ENCODE measurements at regions of chr11 and their contacts with region 1.

Region 1: GRCh38 chr11:73350908-73351636 is 25.1 kb upstream of the RELT start:
- DNase-seq: peak; percentile 85
- ATAC-seq: peak; percentile 96
- H3K4me3 ChIP-seq: no peak overlapping the region
- H3K4me3 Mint-ChIP-seq: no peak overlapping the region
- H3K27ac ChIP-seq: peak overlapping the region in 1 of 2 donors; percentile 46
- H3K27ac Mint-ChIP-seq: peak overlapping the region; percentile 41
- H3K4me1 ChIP-seq: peaks cover 0 to 4% of the 10 kb centered on the region in 2 donors
- H3K4me1 Mint-ChIP-seq: peaks cover 11% of the 10 kb centered on the region
- H3K27me3 ChIP-seq: no peaks in the 10 kb centered on the region
- H3K27me3 Mint-ChIP-seq: peaks cover 5% of the 10 kb centered on the region
- CTCF ChIP-seq: peak; percentile 97

Region 2: GRCh38 chr11:72969894-72970335 is 381.2 kb before region 1 on chr11:
- CTCF ChIA-PET with region 1: no interaction called
- POLR2A ChIA-PET with region 1: no interaction called
- intact Hi-C with region 1: no loop called
- DNase-seq: no peak
- ATAC-seq: no peak
- H3K4me3 ChIP-seq: no peak overlapping the region
- H3K4me3 Mint-ChIP-seq: no peak overlapping the region
- H3K27ac ChIP-seq: peak overlapping the region; percentile 35 to 63
- H3K27ac Mint-ChIP-seq: peak overlapping the region; percentile 56
- H3K4me1 ChIP-seq: peaks cover 24 to 37% of the 10 kb centered on the region in 2 donors
- H3K4me1 Mint-ChIP-seq: peaks cover 65% of the 10 kb centered on the region
- H3K27me3 ChIP-seq: no peaks in the 10 kb centered on the region
- H3K27me3 Mint-ChIP-seq: no peaks in the 10 kb centered on the region
- CTCF ChIP-seq: no peak

Region 3: GRCh38 chr11:73177778-73178577 is 173.1 kb before region 1 on chr11:
- CTCF ChIA-PET with region 1: no interaction called
- POLR2A ChIA-PET with region 1: no interaction called
- intact Hi-C with region 1: no loop called
- DNase-seq: peak; percentile 88
- ATAC-seq: peak; percentile 99
- H3K4me3 ChIP-seq: peak overlapping the region in 1 of 5 experiments; percentile 16
- H3K4me3 Mint-ChIP-seq: peak overlapping the region; percentile 37
- H3K27ac ChIP-seq: peak overlapping the region; percentile 17 to 19
- H3K27ac Mint-ChIP-seq: peak overlapping the region; percentile 81
- H3K4me1 ChIP-seq: peaks cover 32 to 40% of the 10 kb centered on the region in 2 donors
- H3K4me1 Mint-ChIP-seq: peaks cover 38% of the 10 kb centered on the region
- H3K27me3 ChIP-seq: no peaks in the 10 kb centered on the region
- H3K27me3 Mint-ChIP-seq: no peaks in the 10 kb centered on the region
- CTCF ChIP-seq: peak; percentile 93

Region 4: DNA sequence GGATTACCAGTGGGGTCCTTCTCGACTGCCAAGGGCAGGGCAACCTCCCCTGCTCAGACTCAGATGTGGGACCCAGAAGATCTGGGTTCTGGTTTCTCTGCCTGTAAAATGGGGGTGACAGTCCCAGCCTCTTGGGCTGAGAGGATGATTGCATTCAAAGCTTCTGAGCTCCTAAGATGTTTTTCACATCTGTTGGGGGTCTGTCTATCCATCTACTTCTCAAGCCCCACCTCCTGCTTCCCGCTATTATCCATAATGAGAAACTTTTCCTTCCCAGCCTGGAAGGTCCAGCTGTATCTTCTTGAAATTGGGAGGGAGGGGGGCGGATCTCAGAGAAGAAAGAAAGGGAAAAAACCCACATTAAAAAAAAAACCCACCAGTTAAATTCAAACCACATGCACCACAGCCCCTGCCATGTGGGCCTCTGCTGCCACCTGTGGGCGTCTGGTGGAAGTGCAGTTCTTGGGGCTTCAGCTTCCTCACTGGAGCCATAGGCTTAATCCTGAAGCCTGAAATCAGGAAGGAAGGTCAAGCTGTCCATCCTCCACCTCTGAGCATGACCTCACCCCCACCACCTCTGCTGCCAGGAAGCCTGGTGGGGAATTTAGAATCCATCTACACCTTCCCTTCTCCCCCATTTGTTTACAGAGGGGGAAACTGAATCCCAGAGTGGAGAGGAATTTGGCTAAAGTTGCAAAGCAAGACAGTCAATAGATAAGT is 15.7 kb before region 1 on chr11:
- CTCF ChIA-PET with region 1: interaction called, 22 read pairs
- POLR2A ChIA-PET with region 1: interaction called, 4 read pairs
- intact Hi-C with region 1: no loop called
- DNase-seq: peak; percentile 81
- ATAC-seq: peak; percentile 81
- H3K4me3 ChIP-seq: no peak overlapping the region
- H3K4me3 Mint-ChIP-seq: no peak overlapping the region
- H3K27ac ChIP-seq: no peak overlapping the region
- H3K27ac Mint-ChIP-seq: no peak overlapping the region
- H3K4me1 ChIP-seq: no peaks in the 10 kb centered on the region
- H3K4me1 Mint-ChIP-seq: no peaks in the 10 kb centered on the region
- H3K27me3 ChIP-seq: peaks cover 0 to 8% (median 2%) of the 10 kb centered on the region in 4 experiments
- H3K27me3 Mint-ChIP-seq: no peaks in the 10 kb centered on the region
- CTCF ChIP-seq: peak; percentile 99

Region 5: DNA sequence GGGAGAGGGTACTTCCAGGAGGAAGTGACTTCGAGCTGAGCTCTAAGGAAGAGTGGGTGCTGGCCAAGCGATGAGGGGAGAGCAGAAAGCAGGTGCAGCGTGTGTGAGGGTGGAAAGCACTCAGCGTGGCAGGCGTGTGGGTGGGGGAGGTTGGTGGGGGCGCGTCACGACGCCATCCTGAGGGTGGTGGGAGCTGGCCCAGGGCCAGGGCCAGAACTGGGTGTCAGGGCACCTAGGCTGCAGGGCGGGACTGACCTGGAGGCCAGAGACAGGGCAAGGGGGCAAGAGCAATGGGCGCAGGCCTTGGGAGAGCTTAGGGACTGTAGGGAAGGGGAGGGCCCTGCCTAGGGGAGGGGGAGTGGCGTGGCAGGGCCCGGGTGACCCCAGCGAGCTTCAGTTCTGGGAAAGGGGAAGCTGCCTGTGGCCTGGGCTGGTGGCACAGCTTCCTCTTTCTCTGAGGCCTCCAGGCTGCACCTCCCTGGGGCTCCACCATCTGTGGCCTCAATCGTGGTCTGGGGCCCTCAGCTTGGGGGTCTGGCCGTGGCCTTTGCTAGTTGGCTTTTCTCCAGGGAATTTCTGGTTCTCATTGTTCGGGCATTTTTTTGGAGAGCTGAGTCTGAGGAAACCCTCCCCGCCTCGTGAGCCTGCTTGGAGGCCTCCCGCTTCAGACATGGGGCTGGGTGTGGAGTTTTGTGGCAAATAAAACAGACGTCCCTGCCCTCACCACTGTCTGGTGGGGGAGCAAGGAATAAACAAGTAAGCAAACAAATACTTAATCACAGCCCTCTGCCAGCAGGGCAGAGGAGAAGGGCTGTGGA is 34.0 kb after region 1 on chr11:
- CTCF ChIA-PET with region 1: interaction called, 352 read pairs
- POLR2A ChIA-PET with region 1: interaction called, 3 read pairs
- intact Hi-C with region 1: no loop called
- DNase-seq: peak; percentile 96
- ATAC-seq: peak; percentile 69
- H3K4me3 ChIP-seq: peak overlapping the region in 4 of 5 experiments; percentile 31 to 58 (median 42)
- H3K4me3 Mint-ChIP-seq: peak overlapping the region; percentile 100
- H3K27ac ChIP-seq: peak overlapping the region; percentile 98
- H3K27ac Mint-ChIP-seq: peak overlapping the region; percentile 99
- H3K4me1 ChIP-seq: peaks cover 100% of the 10 kb centered on the region in 2 donors
- H3K4me1 Mint-ChIP-seq: peaks cover 99% of the 10 kb centered on the region
- H3K27me3 ChIP-seq: no peaks in the 10 kb centered on the region
- H3K27me3 Mint-ChIP-seq: no peaks in the 10 kb centered on the region
- CTCF ChIP-seq: no peak

Region 6: DNA sequence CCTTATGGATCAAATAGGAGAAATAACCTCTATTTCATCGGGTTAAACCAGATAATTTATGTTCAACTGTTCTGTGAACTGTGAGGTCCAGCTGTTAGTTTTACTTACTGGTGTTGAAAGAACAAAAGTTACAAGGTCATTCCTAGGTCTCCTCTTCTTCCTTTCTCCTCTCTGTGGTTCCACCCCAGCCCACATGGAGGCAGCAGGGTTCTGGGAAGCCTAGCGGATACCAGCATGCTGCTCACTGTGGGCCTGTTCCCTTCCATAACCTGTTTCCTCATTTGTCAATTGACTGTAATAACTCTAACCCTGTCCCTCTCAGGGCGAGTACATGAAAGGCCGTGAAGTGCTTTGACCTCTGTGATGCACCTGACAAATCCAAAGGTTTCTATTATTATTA is 53.0 kb after region 1 on chr11:
- CTCF ChIA-PET with region 1: interaction called, 102 read pairs
- POLR2A ChIA-PET with region 1: no interaction called
- intact Hi-C with region 1: no loop called
- DNase-seq: peak; percentile 21
- ATAC-seq: no peak
- H3K4me3 ChIP-seq: no peak overlapping the region
- H3K4me3 Mint-ChIP-seq: no peak overlapping the region
- H3K27ac ChIP-seq: peak overlapping the region in 1 of 2 donors; percentile 37
- H3K27ac Mint-ChIP-seq: no peak overlapping the region
- H3K4me1 ChIP-seq: no peaks in the 10 kb centered on the region
- H3K4me1 Mint-ChIP-seq: peaks cover 2% of the 10 kb centered on the region
- H3K27me3 ChIP-seq: no peaks in the 10 kb centered on the region
- H3K27me3 Mint-ChIP-seq: no peaks in the 10 kb centered on the region
- CTCF ChIP-seq: no peak

Region 7: DNA sequence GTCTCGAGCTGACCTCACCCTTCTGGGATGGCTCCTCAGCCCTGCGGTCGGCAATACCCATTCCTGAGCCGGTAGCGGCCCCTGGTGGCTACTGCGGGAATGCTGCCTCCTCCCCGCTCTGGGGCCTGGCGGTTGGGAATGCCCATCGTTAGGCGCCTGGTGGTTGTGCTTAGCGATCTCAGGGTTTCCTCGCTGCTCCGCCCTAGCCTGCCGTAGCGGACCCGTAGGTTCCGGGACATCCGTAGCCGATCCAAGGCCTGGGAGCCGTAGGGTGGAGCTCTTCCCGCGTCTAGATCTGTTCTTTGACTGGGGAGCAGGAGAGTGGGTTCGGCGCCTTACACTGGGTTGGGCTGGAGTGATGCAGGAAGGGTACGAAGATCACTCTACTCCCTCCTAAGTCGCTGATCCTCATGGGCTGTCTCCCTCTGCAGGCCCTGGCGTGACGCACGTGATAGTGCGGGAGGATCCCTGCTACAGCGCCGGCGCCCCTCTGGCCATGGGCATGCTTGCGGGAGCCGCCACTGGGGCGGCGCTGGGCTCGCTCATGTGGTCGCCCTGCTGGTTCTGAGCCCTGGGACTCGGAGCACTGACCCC is 310.1 kb after region 1 on chr11:
- CTCF ChIA-PET with region 1: interaction called, 108 read pairs
- POLR2A ChIA-PET with region 1: no interaction called
- intact Hi-C with region 1: loop called (anchors 1 kb)
- DNase-seq: peak; percentile 88
- ATAC-seq: peak; percentile 97
- H3K4me3 ChIP-seq: peak overlapping the region in 4 of 5 experiments; percentile 6 to 30 (median 22)
- H3K4me3 Mint-ChIP-seq: peak overlapping the region; percentile 68
- H3K27ac ChIP-seq: no peak overlapping the region
- H3K27ac Mint-ChIP-seq: no peak overlapping the region
- H3K4me1 ChIP-seq: peaks cover 9 to 10% of the 10 kb centered on the region in 2 donors
- H3K4me1 Mint-ChIP-seq: peaks cover 14% of the 10 kb centered on the region
- H3K27me3 ChIP-seq: peaks cover 0 to 13% (median 4%) of the 10 kb centered on the region in 4 experiments
- H3K27me3 Mint-ChIP-seq: peaks cover 7% of the 10 kb centered on the region
- CTCF ChIP-seq: peak; percentile 99